Sigmoid colon (tissue), 7 donors: ENCODE measurements at regions of chr3 and their contacts with region 1.

Region 1: GRCh38 chr3:31768479-31769123 is 212.5 kb downstream of the OSBPL10 start:
- DNase-seq: peak; percentile 67
- H3K4me3 ChIP-seq: no peak overlapping the region
- H3K27ac ChIP-seq: no peak overlapping the region
- H3K4me1 ChIP-seq: peaks cover 0 to 7% (median 0%) of the 10 kb centered on the region in 4 donors
- H3K27me3 ChIP-seq: no peaks in the 10 kb centered on the region
- CTCF ChIP-seq: peak in 3 of 4 experiments; percentile 49 to 57 (median 50)
- EP300 ChIP-seq: no peak
- POLR2A ChIP-seq: no peak

Region 2: DNA sequence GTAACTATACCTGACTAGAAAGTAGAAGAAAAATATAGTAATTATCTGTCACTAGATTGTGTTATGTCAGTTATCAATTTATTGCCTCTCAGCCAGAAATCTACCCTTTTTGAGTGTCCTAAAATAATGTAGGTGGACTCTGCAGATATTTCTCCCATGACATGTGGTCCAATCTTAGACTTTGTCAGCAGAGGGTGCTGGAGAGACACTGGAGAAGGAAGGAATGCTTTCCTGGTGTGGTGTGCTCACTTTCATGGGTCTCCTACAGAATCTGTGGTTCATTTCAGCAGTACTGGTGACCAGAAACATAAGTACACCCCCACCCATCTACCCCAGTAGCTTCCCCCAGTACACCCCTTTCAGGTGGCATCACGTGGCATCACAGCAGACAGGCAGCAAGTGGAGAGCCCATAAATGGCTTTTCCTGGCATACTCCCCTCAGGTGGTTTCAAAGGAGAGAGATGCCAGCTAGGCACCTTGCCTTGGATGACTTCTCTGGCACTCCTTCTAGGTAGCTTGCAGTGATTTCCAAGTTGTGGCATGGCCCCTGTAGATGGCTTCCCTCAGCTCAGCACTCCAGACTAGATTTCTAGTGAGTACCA is 988.8 kb before region 1 on chr3:
- intact Hi-C with region 1: loop called (anchors 10 kb)
- DNase-seq: no peak
- H3K4me3 ChIP-seq: no peak overlapping the region
- H3K27ac ChIP-seq: no peak overlapping the region
- H3K4me1 ChIP-seq: no peaks in the 10 kb centered on the region
- H3K27me3 ChIP-seq: no peaks in the 10 kb centered on the region
- CTCF ChIP-seq: no peak
- EP300 ChIP-seq: no peak
- POLR2A ChIP-seq: no peak

Region 3: GRCh38 chr3:31550452-31551251 is 217.9 kb before region 1 on chr3:
- intact Hi-C with region 1: loop called (anchors 10 kb)
- DNase-seq: no peak
- H3K4me3 ChIP-seq: no peak overlapping the region
- H3K27ac ChIP-seq: no peak overlapping the region
- H3K4me1 ChIP-seq: peaks cover 0 to 70% (median 38%) of the 10 kb centered on the region in 4 donors
- H3K27me3 ChIP-seq: no peaks in the 10 kb centered on the region
- CTCF ChIP-seq: peak in 3 of 4 experiments; percentile 36 to 58 (median 54)
- EP300 ChIP-seq: no peak
- POLR2A ChIP-seq: no peak